ENCODE measurements at regions of chr2 and their contacts with region 1.

Region 1: DNA sequence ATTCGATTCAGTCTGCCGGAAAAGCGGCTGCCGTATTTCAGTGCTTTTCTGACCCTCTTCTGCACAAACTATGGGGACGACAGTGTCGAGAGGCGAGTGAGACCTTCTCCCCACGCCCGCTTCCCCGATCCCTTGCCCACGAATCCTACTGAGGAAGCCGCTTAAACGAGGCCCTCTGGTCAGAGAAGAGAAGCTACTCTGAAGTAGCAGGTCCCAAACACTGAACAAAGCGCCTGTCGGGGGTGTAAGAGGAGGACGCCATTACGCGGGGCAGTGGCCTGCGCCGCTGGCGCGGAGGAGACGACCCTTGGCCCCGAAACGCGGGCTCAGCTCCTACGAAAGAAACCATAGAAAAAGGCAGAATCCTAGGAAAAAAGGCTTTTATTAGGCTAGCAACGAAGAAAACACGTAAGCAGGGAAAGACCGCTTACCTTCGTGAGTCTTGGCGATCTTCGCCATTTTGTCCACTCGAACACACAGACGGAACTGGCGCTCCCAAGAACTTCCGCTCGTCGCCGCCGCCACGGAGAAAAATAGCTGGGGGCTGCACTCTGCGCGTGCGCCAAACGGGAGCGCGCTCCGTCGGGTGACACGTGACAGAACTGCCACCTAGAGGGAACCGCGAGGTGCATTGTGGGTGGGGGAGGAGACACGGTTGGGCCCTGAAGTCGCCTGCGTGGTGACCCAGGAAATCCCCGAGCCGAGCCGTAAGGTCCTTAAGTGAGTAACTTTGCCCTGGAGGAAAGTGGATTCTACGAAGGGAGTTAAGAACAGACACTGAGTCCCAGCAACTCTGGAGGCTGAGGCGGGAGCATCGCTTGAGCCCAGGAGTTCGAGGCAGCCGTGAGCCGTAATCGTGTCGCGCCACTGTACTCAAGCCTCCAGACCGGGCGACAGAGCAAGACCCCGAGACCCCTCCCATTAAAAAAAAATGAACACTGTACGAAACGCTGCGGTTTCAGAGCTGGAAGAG is at the start of gene SF3B1:
- DNase-seq: peak; percentile 99 to 100
- ATAC-seq: peak; percentile 94 to 99 (median 97)
- H3K4me3 ChIP-seq: peak within 1 kb of the TSS; percentile 92
- H3K4me3 Mint-ChIP-seq: peak within 1 kb of the TSS; percentile 98
- H3K27ac ChIP-seq: peak within 1 kb of the TSS; percentile 97
- H3K27ac Mint-ChIP-seq: peak within 1 kb of the TSS; percentile 98 to 100
- H3K4me1 ChIP-seq: peaks cover 30% of the 10 kb centered on the region
- H3K4me1 Mint-ChIP-seq: peaks cover 60 to 64% of the 10 kb centered on the region in 2 donors
- H3K27me3 ChIP-seq: no peaks in the 10 kb centered on the region
- H3K27me3 Mint-ChIP-seq: no peaks in the 10 kb centered on the region
- CTCF ChIP-seq: no peak
- total RNA-seq, gene SF3B1: 387 to 472 (median 447) TPM

Region 2: DNA sequence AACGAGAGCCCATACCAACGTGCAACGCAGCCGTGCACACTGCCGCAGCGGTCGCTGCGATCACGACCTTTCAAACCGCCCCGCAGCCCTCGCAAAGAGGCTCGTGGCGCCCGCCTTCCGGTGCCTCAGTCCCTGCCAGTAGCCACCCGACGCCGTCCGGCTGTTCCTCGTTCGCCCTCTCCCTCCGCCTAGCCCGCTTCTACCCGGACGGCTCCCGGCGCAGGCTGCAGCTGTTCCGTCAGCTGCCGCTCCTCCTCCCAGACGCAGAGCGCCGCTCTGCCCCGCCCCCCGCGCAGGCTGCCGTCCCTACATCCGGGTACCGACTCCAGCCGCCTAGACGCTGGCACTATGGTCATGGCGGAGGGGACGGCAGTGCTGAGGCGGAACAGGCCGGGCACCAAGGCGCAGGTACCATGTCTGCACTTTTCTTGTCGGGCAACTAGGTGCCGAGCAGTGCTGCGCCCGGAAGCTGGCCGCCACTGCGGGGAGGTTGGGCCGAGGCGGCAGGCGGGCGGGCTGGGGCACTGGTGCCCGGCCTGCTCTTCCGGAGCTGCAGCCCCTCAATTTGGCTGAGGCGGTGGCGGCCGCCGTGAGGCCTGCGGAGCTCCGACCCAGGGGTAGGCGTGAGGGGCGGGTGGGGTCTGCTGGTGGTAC is 81.0 kb after region 1 on chr2 and contains the start of gene MOB4:
- intact Hi-C with region 1: loop called (anchors 5 kb)
- DNase-seq: peak; percentile 97
- ATAC-seq: peak; percentile 89 to 97 (median 92)
- H3K4me3 ChIP-seq: peak within 1 kb of the TSS; percentile 64
- H3K4me3 Mint-ChIP-seq: peak within 1 kb of the TSS; percentile 92
- H3K27ac ChIP-seq: peak within 1 kb of the TSS; percentile 88
- H3K27ac Mint-ChIP-seq: peak within 1 kb of the TSS; percentile 90 to 97
- H3K4me1 ChIP-seq: peaks cover 20% of the 10 kb centered on the region
- H3K4me1 Mint-ChIP-seq: peaks cover 36 to 39% of the 10 kb centered on the region in 2 donors
- H3K27me3 ChIP-seq: no peaks in the 10 kb centered on the region
- H3K27me3 Mint-ChIP-seq: no peaks in the 10 kb centered on the region
- CTCF ChIP-seq: no peak
- total RNA-seq, gene MOB4: 27.1 to 40.0 (median 34.9) TPM